Left ventricle myocardium inferior (tissue), 1 donor: ENCODE measurements at regions of chr19 and their contacts with region 1.

Region 1: GRCh38 chr19:57978586-57979289 is 4.4 kb upstream of the C19orf18 start:
- DNase-seq: no peak
- H3K4me3 ChIP-seq: no peak overlapping the region
- H3K27ac ChIP-seq: no peak overlapping the region
- H3K4me1 ChIP-seq: no peaks in the 10 kb centered on the region
- H3K27me3 ChIP-seq: no peaks in the 10 kb centered on the region
- CTCF ChIP-seq: no peak

Region 2: DNA sequence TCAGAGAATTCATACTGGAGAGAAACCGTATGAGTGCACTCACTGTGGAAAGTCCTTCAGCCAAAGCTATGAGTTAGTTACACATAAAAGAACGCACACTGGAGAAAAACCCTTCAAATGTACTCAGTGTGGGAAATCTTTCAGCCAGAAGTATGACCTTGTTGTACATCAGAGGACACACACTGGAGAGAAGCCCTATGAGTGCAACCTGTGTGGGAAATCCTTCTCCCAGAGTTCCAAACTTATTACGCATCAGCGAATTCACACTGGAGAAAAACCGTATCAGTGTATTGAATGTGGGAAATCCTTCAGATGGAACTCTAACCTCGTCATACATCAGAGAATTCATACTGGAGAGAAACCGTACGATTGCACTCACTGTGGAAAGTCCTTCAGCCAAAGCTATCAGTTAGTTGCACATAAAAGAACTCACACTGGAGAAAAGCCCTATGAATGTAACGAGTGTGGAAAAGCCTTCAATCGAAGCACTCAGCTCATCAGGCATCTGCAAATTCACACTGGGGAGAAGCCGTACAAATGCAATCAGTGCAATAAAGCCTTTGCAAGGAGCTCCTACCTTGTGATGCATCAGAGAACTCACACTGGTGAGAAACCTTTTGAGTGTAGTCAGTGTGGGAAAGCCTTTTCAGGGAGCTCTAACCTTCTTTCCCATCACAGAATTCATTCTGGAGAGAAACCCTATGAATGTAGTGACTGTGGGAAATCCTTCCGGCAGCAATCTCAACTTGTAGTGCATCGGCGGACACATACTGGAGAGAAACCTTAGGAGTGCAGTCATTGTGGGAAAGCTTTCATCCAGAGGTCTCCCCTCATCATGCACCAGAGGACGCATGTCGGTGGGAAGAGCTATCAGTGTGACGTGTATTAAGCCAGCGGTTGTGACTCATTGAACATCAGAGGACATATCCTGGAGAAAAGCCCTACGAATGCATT is 283.5 kb after region 1 on chr19:
- intact Hi-C with region 1: loop called (anchors 10 kb)
- DNase-seq: no peak
- H3K4me3 ChIP-seq: no peak overlapping the region
- H3K27ac ChIP-seq: no peak overlapping the region
- H3K4me1 ChIP-seq: no peaks in the 10 kb centered on the region
- H3K27me3 ChIP-seq: no peaks in the 10 kb centered on the region
- CTCF ChIP-seq: no peak